Endothelial cell of umbilical vein (primary cell): ENCODE measurements at regions of chr11 and their contacts with region 1.

Region 1: GRCh38 chr11:73760679-73761402 is at the start of gene RAB6A:
- DNase-seq: peak; percentile 100
- H3K4me3 ChIP-seq: peak within 1 kb of the TSS; percentile 85 to 95 (median 89)
- H3K27ac ChIP-seq: peak within 1 kb of the TSS; percentile 64
- H3K4me1 ChIP-seq: peaks cover 19% of the 10 kb centered on the region
- H3K27me3 ChIP-seq: peaks cover 0 to 2% of the 10 kb centered on the region in 2 experiments
- CTCF ChIP-seq: peak; percentile 6 to 32
- POLR2A ChIP-seq: peak; percentile 73
- total RNA-seq, gene RAB6A: 130 and 138 TPM in 2 replicates

Region 2: GRCh38 chr11:73743045-73743444 is 17.8 kb before region 1 on chr11:
- CTCF ChIA-PET with region 1: no interaction called
- POLR2A ChIA-PET with region 1: no interaction called
- dilution Hi-C with region 1: no loop called
- intact Hi-C with region 1: no loop called
- DNase-seq: no peak
- H3K4me3 ChIP-seq: no peak overlapping the region
- H3K27ac ChIP-seq: no peak overlapping the region
- H3K4me1 ChIP-seq: no peaks in the 10 kb centered on the region
- H3K27me3 ChIP-seq: no peaks in the 10 kb centered on the region
- CTCF ChIP-seq: no peak
- POLR2A ChIP-seq: no peak

Region 3: GRCh38 chr11:73779084-73779902 is 18.5 kb after region 1 on chr11:
- CTCF ChIA-PET with region 1: interaction called, 22 read pairs
- POLR2A ChIA-PET with region 1: interaction called, 39 read pairs
- dilution Hi-C with region 1: no loop called
- intact Hi-C with region 1: loop called (anchors 1 kb)
- DNase-seq: peak; percentile 99
- H3K4me3 ChIP-seq: peak overlapping the region; percentile 36 to 74 (median 46)
- H3K27ac ChIP-seq: peak overlapping the region; percentile 87
- H3K4me1 ChIP-seq: peaks cover 4% of the 10 kb centered on the region
- H3K27me3 ChIP-seq: no peaks in the 10 kb centered on the region
- CTCF ChIP-seq: no peak
- POLR2A ChIP-seq: peak; percentile 94

Region 4: DNA sequence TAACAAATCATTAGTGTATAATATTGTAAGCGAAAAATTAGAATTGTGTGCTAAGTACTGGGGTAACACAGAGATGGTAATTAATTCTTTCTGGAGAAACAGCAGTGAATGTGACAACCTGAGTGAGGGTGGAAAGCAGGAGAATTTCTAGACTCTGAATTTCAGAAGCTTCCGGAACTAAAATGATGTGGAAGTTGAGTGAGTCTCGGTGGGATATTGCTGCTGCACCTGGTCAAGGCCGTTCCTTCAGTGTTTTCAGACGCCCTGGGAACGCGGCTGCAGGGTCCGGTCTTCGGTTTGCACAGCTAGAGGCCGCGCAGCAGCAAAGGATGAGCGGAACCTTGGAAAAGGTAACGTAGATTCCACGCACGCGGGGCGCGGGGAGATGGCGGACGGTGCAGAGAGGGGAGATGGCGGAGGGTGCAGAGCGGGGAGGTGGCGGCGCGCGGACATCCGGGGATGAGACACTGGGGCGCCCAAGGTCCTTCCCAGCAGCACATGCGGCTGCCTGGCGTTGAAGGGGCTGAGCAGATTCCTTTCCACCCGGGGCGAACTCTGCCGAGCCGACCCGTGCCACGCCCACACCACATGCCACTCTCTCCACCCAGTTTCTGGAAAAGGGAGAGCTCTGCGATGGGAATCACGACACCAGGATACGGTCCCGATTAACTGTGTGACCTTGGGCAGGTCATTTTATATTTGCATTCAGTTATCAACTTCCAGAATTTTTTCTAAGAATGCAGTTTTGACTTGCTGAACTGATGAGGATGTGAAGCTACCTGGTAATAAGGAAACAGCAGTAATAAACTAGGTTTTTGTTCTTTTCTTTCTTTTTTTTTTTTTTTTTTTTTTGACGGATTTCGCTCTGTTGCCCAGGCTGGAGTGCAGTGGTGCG is 27.0 kb after region 1 on chr11 and contains the start of gene MRPL48:
- CTCF ChIA-PET with region 1: interaction called, 11 read pairs
- POLR2A ChIA-PET with region 1: interaction called, 3 read pairs
- dilution Hi-C with region 1: no loop called
- intact Hi-C with region 1: loop called (anchors 1 kb)
- DNase-seq: peak; percentile 88
- H3K4me3 ChIP-seq: peak within 1 kb of the TSS; percentile 52 to 81 (median 79)
- H3K27ac ChIP-seq: peak within 1 kb of the TSS; percentile 39
- H3K4me1 ChIP-seq: peaks cover 8% of the 10 kb centered on the region
- H3K27me3 ChIP-seq: no peaks in the 10 kb centered on the region
- CTCF ChIP-seq: no peak
- POLR2A ChIP-seq: peak; percentile 85
- total RNA-seq, gene MRPL48: 35.2 and 38.3 TPM in 2 replicates

Region 5: DNA sequence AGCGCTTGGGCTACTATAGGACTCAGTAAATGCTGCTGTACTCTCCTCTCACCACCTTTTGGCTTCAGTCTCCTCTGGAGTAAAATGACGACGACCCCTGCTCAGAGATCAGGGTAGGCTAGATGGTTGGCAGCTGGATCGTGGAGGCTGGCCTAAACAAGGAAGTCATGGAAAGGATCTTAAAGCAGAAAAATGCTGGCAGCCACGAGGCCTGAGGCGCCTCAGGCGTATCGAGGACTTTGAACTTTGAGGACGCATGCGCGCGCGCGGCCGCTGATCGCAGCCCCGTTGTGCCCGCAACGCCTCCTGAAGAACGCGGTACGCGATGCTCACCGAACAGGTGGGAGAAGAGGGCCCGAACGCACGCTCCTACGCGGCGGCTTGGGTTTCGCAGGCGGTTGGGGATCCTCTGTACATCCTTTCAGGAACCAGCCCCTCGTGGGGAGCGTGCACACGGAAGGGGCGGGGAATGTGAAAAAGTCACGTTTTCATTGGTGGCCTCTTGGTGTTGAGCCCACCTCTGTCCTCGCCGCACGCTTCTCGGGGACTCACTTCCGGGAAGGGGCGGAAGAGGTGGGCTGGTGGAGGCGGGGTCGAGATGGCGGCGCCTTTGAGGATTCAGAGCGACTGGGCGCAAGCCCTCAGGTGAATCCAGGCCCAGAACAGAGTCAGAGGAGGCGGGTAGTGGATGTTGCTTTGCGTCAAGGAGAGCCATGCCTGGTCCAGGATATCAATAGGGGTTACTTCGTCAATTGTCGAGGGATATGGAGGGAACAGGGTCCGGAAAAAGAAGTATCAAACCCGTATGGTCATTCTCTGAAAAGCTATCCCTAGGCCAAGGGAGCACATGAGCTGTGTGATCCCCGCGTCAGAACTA is 115.8 kb after region 1 on chr11 and contains the starts of genes COA4 and PAAF1:
- CTCF ChIA-PET with region 1: no interaction called
- POLR2A ChIA-PET with region 1: no interaction called
- dilution Hi-C with region 1: no loop called
- intact Hi-C with region 1: loop called (anchors 5 kb)
- DNase-seq: peak; percentile 98
- H3K4me3 ChIP-seq: peak within 1 kb of the TSS; percentile 83 to 97 (median 93)
- H3K27ac ChIP-seq: peak within 1 kb of the TSS; percentile 60
- H3K4me1 ChIP-seq: peaks cover 16% of the 10 kb centered on the region
- H3K27me3 ChIP-seq: no peaks in the 10 kb centered on the region
- CTCF ChIP-seq: no peak
- POLR2A ChIP-seq: peak; percentile 79
- total RNA-seq, gene COA4: 58.1 and 72.1 TPM in 2 replicates
- total RNA-seq, gene PAAF1: 14.5 and 16.1 TPM in 2 replicates